A549 (cell line): ENCODE measurements at regions of chr1 and their contacts with region 1.

Region 1: GRCh38 chr1:214632091-214632490 is 29.1 kb downstream of the CENPF start:
- DNase-seq: no peak
- ATAC-seq: no peak
- H3K4me3 ChIP-seq: no peak overlapping the region
- H3K27ac ChIP-seq: no peak overlapping the region
- H3K4me1 ChIP-seq: no peaks in the 10 kb centered on the region
- CTCF ChIP-seq: no peak
- EP300 ChIP-seq: no peak
- POLR2A ChIP-seq: no peak
- RAD21 ChIP-seq: no peak

Region 2: GRCh38 chr1:215526553-215527151 is 894.6 kb after region 1 on chr1:
- CTCF ChIA-PET with region 1: interaction called, 11 read pairs
- POLR2A ChIA-PET with region 1: no interaction called
- DNase-seq: peak in 1 of 2 experiments; percentile 52
- ATAC-seq: peak; percentile 66 to 77; a peak in 4 of 6 replicates
- H3K4me3 ChIP-seq: no peak overlapping the region
- H3K27ac ChIP-seq: no peak overlapping the region
- H3K4me1 ChIP-seq: no peaks in the 10 kb centered on the region
- CTCF ChIP-seq: peak; percentile 78
- EP300 ChIP-seq: no peak
- POLR2A ChIP-seq: no peak
- RAD21 ChIP-seq: peak; percentile 84 to 87